ENCODE measurements at regions of chr5 and their contacts with region 1.

Region 1: DNA sequence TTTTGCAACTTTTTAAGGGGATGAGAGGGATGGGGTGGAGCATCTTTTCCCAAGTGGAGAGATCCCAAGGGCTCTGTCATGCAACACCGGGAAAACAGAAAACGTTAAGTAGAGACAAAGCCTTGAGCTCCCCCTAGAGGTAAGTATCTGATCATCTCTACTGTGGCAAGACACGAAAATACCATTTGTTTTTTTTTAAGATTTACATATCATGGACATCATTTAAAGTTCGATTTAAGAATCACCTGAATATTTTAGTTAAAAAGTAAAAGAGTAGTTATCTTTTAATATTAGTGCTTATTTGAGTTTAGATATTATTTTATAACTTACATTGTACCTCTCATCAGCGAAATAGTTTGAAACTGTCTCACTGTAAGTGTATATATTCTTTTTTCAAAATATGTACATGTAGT is 200.4 kb downstream of the LRRC70 start:
- DNase-seq: peak; percentile 77
- H3K4me3 ChIP-seq: no peak overlapping the region
- H3K27ac ChIP-seq: no peak overlapping the region
- H3K4me1 ChIP-seq: no peaks in the 10 kb centered on the region
- H3K27me3 ChIP-seq: no peaks in the 10 kb centered on the region
- CTCF ChIP-seq: peak; percentile 87

Region 2: DNA sequence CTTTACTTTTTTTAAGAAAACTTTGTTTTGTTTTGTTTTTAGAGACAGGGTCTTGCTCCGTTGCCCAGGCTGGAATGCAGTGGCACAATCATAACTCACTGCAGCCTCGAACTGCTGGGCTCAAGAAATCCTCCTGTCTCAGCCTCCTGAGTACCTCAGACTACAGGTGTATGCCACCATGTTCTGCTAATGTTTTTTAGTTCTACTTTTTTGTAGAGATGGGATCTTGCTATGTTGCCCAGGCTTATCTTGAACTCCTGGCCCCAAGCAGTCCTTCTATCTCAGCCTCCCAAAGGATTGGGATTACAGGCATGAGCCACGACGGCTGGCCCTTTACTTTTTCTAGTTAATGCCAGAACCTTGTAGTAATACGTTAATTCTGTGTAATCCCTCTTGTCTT is 330.5 kb before region 1 on chr5:
- CTCF ChIA-PET with region 1: interaction called, 3 read pairs
- POLR2A ChIA-PET with region 1: no interaction called
- intact Hi-C with region 1: loop called (anchors 1 kb)
- DNase-seq: no peak
- H3K4me3 ChIP-seq: no peak overlapping the region
- H3K27ac ChIP-seq: no peak overlapping the region
- H3K4me1 ChIP-seq: peaks cover under 1% of the 10 kb centered on the region
- H3K27me3 ChIP-seq: no peaks in the 10 kb centered on the region
- CTCF ChIP-seq: no peak

Region 3: DNA sequence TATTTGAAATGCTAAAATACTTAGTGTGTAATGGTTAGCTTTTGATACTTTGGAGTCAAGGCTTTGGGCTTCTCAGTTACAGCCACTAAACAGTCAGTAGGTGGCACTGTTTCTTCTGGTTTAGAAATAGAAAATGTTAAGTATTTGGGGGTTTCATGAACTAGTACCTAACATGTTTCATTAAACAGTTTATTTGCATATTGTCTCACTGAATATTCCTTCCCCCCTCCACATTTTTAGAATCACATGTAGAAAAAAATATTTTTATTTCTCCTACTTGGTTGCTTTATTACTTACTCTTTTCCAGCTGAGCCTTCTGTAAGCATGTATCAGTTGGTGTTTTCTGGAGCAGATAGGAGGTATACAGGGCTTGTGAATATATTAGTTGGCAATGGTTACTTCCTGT is 318.4 kb before region 1 on chr5:
- CTCF ChIA-PET with region 1: interaction called, 10 read pairs
- POLR2A ChIA-PET with region 1: no interaction called
- intact Hi-C with region 1: loop called (anchors 1 kb)
- DNase-seq: peak; percentile 76
- H3K4me3 ChIP-seq: no peak overlapping the region
- H3K27ac ChIP-seq: no peak overlapping the region
- H3K4me1 ChIP-seq: no peaks in the 10 kb centered on the region
- H3K27me3 ChIP-seq: no peaks in the 10 kb centered on the region
- CTCF ChIP-seq: peak; percentile 85

Region 4: GRCh38 chr5:62701036-62701435 is 78.0 kb before region 1 on chr5:
- CTCF ChIA-PET with region 1: no interaction called
- POLR2A ChIA-PET with region 1: no interaction called
- intact Hi-C with region 1: no loop called
- DNase-seq: no peak
- H3K4me3 ChIP-seq: no peak overlapping the region
- H3K27ac ChIP-seq: no peak overlapping the region
- H3K4me1 ChIP-seq: no peaks in the 10 kb centered on the region
- H3K27me3 ChIP-seq: no peaks in the 10 kb centered on the region
- CTCF ChIP-seq: no peak

Measured in A673 (cell line).